PC-9 (cell line): ENCODE measurements at regions of chr1 and their contacts with region 1.

Region 1: DNA sequence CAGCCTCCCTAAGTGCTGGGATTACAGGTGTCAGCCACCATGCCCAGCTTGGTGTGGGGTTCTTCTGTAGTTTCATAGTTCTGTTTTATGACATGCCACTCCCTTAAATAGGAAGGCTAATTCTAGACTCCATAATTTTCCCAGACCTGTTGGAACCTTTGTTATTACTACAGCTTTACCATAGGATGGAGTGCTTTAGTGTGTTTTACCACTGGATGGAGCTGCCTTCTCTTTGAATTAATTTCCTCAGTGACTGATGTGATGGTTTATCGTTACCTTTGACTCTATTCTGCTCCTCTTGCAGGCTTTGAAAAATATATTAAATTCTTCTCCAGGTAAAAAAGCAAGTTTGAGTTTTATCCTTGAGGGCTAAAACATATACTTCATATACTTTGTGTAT is 84.6 kb upstream of the NEK7 start:
- DNase-seq: no peak
- H3K4me3 ChIP-seq: no peak overlapping the region
- H3K27ac ChIP-seq: no peak overlapping the region
- H3K4me1 ChIP-seq: no peaks in the 10 kb centered on the region
- H3K27me3 ChIP-seq: no peaks in the 10 kb centered on the region
- CTCF ChIP-seq: no peak

Region 2: DNA sequence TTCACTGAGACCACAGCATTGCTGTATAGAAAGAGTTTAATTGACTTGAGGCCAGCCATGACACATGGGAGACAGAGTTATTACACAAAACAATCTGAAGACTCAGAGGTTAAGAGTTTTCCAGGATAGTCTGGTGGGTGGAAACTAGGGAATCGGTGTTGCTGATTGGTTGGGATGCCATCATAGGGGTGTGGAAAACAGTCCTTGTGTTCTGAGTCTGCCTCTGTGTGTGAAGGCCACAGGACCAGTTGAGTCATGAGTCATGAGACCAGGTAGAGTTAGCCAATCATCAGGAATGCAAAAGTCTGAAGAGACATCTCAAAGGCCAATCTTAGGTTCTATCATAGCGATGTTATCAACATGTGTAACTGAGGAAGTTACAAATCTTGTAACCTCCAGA is 34.9 kb after region 1 on chr1:
- CTCF ChIA-PET with region 1: no interaction called
- POLR2A ChIA-PET with region 1: interaction called, 14 read pairs
- intact Hi-C with region 1: no loop called
- DNase-seq: peak in 1 of 2 experiments; percentile 16
- H3K4me3 ChIP-seq: no peak overlapping the region
- H3K27ac ChIP-seq: peak overlapping the region; percentile 45
- H3K4me1 ChIP-seq: peaks cover 34% of the 10 kb centered on the region
- H3K27me3 ChIP-seq: no peaks in the 10 kb centered on the region
- CTCF ChIP-seq: no peak

Region 3: GRCh38 chr1:198199105-198199504 is 126.9 kb after region 1 on chr1:
- CTCF ChIA-PET with region 1: no interaction called
- POLR2A ChIA-PET with region 1: interaction called, 21 read pairs
- intact Hi-C with region 1: no loop called
- DNase-seq: no peak
- H3K4me3 ChIP-seq: no peak overlapping the region
- H3K27ac ChIP-seq: no peak overlapping the region
- H3K4me1 ChIP-seq: no peaks in the 10 kb centered on the region
- H3K27me3 ChIP-seq: no peaks in the 10 kb centered on the region
- CTCF ChIP-seq: no peak

Region 4: GRCh38 chr1:198220428-198220827 is 148.3 kb after region 1 on chr1:
- CTCF ChIA-PET with region 1: no interaction called
- POLR2A ChIA-PET with region 1: no interaction called
- intact Hi-C with region 1: no loop called
- DNase-seq: peak; percentile 26 to 39
- H3K4me3 ChIP-seq: no peak overlapping the region
- H3K27ac ChIP-seq: no peak overlapping the region
- H3K4me1 ChIP-seq: no peaks in the 10 kb centered on the region
- H3K27me3 ChIP-seq: no peaks in the 10 kb centered on the region
- CTCF ChIP-seq: no peak